Spleen (tissue), 13 donors: ENCODE measurements at regions of chr17 and their contacts with region 1.

Region 1: GRCh38 chr17:63478791-63479494 is 2.1 kb downstream of the ACE start:
- DNase-seq: peak; percentile 92
- H3K4me3 ChIP-seq: no peak overlapping the region
- H3K27ac ChIP-seq: no peak overlapping the region
- H3K4me1 ChIP-seq: peaks cover 10 to 55% (median 37%) of the 10 kb centered on the region in 6 donors
- H3K27me3 ChIP-seq: peaks cover 0 to 85% (median 29%) of the 10 kb centered on the region in 7 donors
- CTCF ChIP-seq: peak; percentile 53 to 89 (median 76)
- POLR2A ChIP-seq: no peak

Region 2: DNA sequence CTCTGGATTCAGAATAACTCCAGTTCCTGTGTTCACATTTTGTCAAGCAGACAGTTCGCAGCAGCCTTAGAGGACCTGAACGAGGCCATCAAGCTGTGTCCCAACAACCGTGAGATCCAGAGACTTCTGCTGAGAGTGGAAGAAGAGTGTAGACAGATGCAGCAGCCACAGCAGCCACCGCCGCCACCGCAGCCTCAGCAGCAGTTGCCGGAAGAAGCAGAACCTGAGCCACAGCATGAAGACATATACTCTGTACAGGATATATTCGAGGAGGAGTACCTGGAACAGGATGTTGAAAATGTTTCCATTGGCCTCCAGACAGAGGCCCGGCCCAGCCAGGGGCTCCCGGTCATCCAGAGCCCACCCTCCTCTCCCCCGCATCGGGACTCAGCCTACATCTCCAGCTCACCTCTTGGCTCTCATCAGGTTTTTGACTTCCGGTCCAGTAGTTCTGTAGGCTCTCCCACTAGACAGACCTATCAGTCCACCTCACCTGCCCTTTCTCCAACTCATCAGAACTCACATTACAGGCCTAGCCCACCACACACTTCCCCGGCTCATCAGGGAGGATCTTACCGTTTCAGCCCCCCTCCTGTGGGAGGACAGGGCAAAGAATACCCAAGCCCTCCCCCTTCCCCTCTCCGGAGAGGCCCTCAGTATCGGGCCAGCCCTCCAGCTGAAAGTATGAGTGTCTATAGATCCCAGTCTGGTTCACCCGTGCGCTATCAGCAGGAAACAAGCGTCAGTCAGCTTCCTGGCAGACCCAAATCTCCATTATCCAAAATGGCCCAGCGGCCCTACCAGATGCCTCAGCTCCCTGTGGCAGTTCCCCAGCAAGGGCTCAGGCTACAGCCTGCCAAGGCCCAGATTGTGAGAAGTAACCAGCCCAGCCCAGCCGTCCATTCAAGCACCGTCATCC is 58.7 kb before region 1 on chr17:
- intact Hi-C with region 1: loop called (anchors 5 kb)
- DNase-seq: no peak
- H3K4me3 ChIP-seq: no peak overlapping the region
- H3K27ac ChIP-seq: peak overlapping the region in 3 of 8 donors; percentile 10 to 51 (median 18)
- H3K4me1 ChIP-seq: peaks cover 3 to 18% (median 9%) of the 10 kb centered on the region in 6 donors
- H3K27me3 ChIP-seq: no peaks in the 10 kb centered on the region
- CTCF ChIP-seq: no peak
- POLR2A ChIP-seq: no peak

Region 3: DNA sequence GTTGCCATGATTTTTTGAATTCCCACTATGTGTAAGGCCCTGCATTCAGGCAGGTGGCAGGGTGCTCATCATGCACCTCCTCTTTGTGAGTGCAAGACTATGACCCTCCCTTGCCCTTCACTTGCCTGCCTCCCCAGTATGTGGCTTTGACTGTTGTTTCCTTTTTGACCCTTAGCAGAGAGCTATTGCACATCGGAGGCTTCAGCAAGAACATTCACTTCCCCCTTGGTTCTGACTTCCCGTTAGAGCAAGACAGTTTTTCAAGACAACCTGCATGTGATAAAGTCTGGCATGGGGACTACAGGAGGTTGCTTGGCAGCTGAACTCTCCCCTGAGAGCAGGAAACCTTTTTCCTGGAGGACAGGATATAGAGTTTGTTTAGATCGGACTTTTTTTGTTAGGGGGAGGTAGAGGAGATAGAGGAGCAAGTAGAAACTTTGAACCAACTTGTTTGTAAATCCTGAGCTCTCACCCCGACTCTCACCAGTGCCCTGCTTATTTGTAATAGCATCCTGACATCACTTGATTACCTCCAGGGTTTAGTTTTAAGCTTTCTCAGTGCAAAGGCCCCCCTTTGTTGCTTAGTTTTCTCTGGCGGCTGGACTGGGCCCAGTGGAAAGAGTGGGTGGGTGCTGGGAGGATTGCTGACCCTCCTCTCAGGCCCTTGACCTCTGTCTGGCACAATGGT is 186.7 kb after region 1 on chr17:
- intact Hi-C with region 1: no loop called
- DNase-seq: peak; percentile 78
- H3K4me3 ChIP-seq: peak overlapping the region in 1 of 8 donors; percentile 30
- H3K27ac ChIP-seq: peak overlapping the region; percentile 24 to 92 (median 82)
- H3K4me1 ChIP-seq: peaks cover 12 to 61% (median 31%) of the 10 kb centered on the region in 6 donors
- H3K27me3 ChIP-seq: no peaks in the 10 kb centered on the region
- CTCF ChIP-seq: peak in 3 of 11 experiments; percentile 11 to 16 (median 11)
- POLR2A ChIP-seq: no peak